ENCODE measurements at regions of chr12 and their contacts with region 1.

Region 1: DNA sequence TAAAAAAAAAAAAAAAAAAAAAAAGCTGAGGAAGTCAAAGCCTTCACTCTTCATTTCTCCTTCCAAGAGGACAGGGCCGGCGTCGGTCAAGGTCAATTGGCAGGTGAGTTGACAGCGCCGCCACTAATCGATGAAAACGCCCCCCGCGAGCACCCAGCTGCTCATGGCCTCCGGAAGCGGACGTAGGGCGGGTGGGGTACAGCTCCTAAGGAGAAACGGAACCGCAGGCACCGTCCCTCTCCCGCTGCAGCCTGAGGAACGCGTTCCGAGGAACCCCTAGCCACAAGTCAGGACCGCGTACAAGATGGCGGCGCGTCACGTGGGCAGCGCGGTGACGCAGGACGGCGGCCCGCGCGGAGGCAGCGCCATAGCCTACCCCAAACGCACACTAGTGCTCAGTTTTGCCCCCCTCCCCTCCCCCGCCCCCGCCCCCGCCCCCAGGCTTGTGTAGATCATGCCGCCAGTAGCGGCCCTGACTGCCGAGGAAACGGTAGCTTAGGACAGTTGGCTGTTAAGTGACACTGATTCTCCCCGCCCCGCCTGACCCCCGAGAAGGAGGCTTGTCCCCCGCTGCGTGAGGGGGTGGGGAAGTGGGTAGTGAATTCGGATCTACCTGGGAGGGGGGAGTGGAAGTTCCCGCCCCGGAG is at the start of gene ATF1:
- DNase-seq: peak; percentile 89 to 91 (median 91)
- H3K4me3 ChIP-seq: peak within 1 kb of the TSS; percentile 67 to 69
- H3K4me3 Mint-ChIP-seq: peak within 1 kb of the TSS; percentile 85 to 99 (median 93)
- H3K27ac ChIP-seq: peak within 1 kb of the TSS; percentile 77
- H3K27ac Mint-ChIP-seq: peak within 1 kb of the TSS; percentile 91 to 97 (median 96)
- H3K4me1 ChIP-seq: peaks cover 27% of the 10 kb centered on the region
- H3K4me1 Mint-ChIP-seq: peaks cover 18 to 48% (median 29%) of the 10 kb centered on the region in 4 donors
- H3K27me3 ChIP-seq: no peaks in the 10 kb centered on the region
- H3K27me3 Mint-ChIP-seq: no peaks in the 10 kb centered on the region
- total RNA-seq, gene ATF1: 52.2 to 52.3 TPM

Region 2: DNA sequence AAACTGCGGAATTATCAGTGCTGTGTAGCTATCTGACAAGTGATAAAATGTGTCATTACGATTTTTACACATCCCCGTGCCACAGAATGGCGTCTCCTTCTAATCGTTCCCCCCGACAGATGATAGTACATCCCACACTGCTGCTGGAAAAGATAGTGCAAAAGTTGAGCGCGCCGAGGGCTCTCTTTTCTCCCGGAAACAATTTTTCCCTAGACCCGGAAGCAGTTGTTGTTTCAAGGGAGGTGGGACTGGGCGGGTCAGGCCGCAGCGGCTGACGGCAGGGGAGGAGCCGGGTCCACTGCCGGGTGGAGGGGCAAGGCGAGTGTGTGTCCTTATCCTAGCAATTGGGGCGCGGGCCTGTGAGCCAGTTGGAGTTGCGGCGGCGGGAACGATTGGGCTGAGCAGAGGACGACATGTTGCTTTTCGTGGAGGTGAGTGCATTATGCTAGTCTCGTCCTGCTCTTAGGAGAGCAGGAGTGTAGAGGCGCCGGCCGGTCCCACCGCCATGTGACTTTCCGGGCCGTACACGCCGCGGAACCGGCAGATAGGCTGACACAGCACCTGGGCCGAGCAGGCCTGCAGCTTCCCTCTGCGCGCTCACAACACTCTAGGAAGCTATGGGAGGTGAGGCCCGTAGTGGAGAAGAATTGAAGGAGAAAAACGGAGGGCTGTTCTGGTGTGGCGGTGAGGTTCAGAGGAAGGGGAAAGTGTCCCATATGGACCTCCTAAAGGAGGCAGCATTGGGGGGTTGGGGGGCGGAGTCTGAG is 363.0 kb before region 1 on chr12 and contains the start of gene LARP4:
- CTCF ChIA-PET with region 1: no interaction called
- POLR2A ChIA-PET with region 1: no interaction called
- intact Hi-C with region 1: loop called (anchors 1 kb)
- DNase-seq: peak; percentile 90 to 94 (median 91)
- H3K4me3 ChIP-seq: peak within 1 kb of the TSS; percentile 63 to 90
- H3K4me3 Mint-ChIP-seq: peak within 1 kb of the TSS; percentile 91 to 99 (median 97)
- H3K27ac ChIP-seq: peak within 1 kb of the TSS; percentile 76
- H3K27ac Mint-ChIP-seq: peak within 1 kb of the TSS; percentile 89 to 98 (median 95)
- H3K4me1 ChIP-seq: peaks cover 28% of the 10 kb centered on the region
- H3K4me1 Mint-ChIP-seq: peaks cover 19 to 42% (median 30%) of the 10 kb centered on the region in 4 donors
- H3K27me3 ChIP-seq: no peaks in the 10 kb centered on the region
- H3K27me3 Mint-ChIP-seq: peaks cover 1 to 5% of the 10 kb centered on the region in 2 donors
- total RNA-seq, gene LARP4: 38.7 to 40.7 TPM

Region 3: GRCh38 chr12:50776749-50777728 is 13.3 kb after region 1 on chr12:
- CTCF ChIA-PET with region 1: interaction called, 19 read pairs
- POLR2A ChIA-PET with region 1: interaction called, 11 read pairs
- intact Hi-C with region 1: no loop called
- DNase-seq: no peak
- H3K4me3 ChIP-seq: no peak overlapping the region
- H3K4me3 Mint-ChIP-seq: peak overlapping the region in 1 of 8 donors; percentile 38
- H3K27ac ChIP-seq: no peak overlapping the region
- H3K27ac Mint-ChIP-seq: peak overlapping the region in 3 of 7 donors; percentile 30 to 72 (median 70)
- H3K4me1 ChIP-seq: peaks cover 9% of the 10 kb centered on the region
- H3K4me1 Mint-ChIP-seq: peaks cover 21 to 38% (median 32%) of the 10 kb centered on the region in 4 donors
- H3K27me3 ChIP-seq: no peaks in the 10 kb centered on the region
- H3K27me3 Mint-ChIP-seq: no peaks in the 10 kb centered on the region

Region 4: GRCh38 chr12:50986966-50987737 is 223.4 kb after region 1 on chr12:
- CTCF ChIA-PET with region 1: interaction called, 47 read pairs
- POLR2A ChIA-PET with region 1: interaction called, 6 read pairs
- intact Hi-C with region 1: loop called (anchors 1 kb)
- DNase-seq: peak in 4 of 5 donors; percentile 14 to 34 (median 18)
- H3K4me3 ChIP-seq: no peak overlapping the region
- H3K4me3 Mint-ChIP-seq: no peak overlapping the region
- H3K27ac ChIP-seq: no peak overlapping the region
- H3K27ac Mint-ChIP-seq: peak overlapping the region in 6 of 7 donors; percentile 30 to 86 (median 62)
- H3K4me1 ChIP-seq: no peaks in the 10 kb centered on the region
- H3K4me1 Mint-ChIP-seq: peaks cover 0 to 6% (median 4%) of the 10 kb centered on the region in 4 donors
- H3K27me3 ChIP-seq: no peaks in the 10 kb centered on the region
- H3K27me3 Mint-ChIP-seq: no peaks in the 10 kb centered on the region

Region 5: DNA sequence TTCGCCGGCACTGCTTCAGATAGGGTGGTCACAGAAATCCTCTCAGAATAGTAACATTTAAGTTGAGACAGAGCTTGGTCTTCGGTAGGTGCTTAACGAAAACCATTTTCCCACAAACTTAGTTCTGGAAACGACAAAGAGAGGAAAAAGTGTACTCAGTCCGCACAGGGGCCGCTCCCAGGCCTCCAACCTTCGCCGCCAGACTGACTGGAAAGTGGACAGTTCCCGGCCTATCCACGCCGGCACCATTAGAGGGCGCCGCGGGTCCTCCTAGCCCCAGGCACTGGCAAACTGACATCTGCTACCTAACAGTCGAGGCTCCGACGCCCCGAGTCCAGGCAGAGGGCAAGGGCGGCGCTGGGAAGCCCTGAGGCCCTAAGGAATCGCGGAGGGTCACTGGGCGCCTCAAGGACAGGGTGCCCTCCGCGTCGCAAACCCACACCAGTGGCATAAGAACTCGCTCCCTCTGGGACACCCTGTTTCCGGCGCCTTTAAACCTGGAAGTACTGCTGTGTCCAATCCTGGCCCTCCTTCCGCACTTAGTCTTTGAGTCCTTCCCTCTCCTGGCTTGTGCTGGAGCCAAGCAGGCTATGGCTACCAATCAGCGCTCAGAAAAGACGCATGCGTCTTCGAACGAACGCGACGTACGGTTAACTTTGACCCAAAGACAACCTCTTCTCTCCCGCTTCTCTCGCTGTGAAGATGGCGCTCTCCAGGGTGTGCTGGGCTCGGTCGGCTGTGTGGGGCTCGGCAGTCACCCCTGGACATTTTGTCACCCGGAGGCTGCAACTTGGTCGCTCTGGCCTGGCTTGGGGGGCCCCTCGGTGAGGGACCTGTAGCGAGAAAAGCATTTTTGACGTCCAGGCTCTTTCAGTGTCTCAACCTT is 284.1 kb after region 1 on chr12 and contains the start of gene LETMD1:
- CTCF ChIA-PET with region 1: interaction called, 5 read pairs
- POLR2A ChIA-PET with region 1: interaction called, 9 read pairs
- intact Hi-C with region 1: loop called (anchors 1 kb)
- DNase-seq: peak; percentile 94 to 97 (median 96)
- H3K4me3 ChIP-seq: peak within 1 kb of the TSS; percentile 92 to 98
- H3K4me3 Mint-ChIP-seq: peak within 1 kb of the TSS; percentile 93 to 98 (median 95)
- H3K27ac ChIP-seq: peak within 1 kb of the TSS; percentile 81
- H3K27ac Mint-ChIP-seq: peak within 1 kb of the TSS; percentile 95 to 99 (median 97)
- H3K4me1 ChIP-seq: peaks cover 27% of the 10 kb centered on the region
- H3K4me1 Mint-ChIP-seq: peaks cover 15 to 40% (median 28%) of the 10 kb centered on the region in 4 donors
- H3K27me3 ChIP-seq: no peaks in the 10 kb centered on the region
- H3K27me3 Mint-ChIP-seq: no peaks in the 10 kb centered on the region
- total RNA-seq, gene LETMD1: 83.7 to 93.3 TPM

Region 6: DNA sequence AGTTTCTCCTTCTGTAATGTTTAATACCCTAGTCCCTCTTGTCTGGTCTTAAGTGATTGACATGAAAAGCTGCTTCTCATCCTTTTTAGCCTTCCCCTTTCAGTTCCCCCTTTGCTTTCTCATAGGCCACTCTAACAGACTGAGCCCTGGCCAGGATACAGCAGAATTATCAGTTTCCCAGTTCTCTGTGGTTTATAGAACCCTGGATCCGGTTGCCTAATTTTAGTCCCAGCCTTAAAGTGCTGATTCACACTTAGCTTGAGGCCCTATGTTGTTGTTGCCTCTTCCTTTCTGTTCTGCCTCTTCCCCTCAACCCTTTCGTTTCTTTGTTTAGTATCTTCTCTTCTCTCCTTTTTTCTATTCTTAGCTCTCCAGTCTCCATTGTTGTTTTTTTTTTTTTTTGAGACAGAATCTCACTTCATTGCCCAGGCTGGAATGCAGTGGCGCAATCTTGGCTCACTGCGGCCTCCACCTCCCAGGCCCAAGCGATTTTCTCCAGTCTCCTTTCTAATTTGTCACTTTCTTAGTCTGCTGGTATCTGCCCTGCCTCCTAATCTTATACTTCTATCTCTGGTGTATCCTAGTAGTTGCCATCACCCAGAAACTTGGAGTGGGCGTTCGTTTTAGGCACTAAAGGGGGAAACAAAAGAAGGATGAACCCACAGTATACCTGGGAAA is 563.1 kb after region 1 on chr12:
- CTCF ChIA-PET with region 1: no interaction called
- POLR2A ChIA-PET with region 1: interaction called, 3 read pairs
- intact Hi-C with region 1: loop called (anchors 10 kb)
- DNase-seq: no peak
- H3K4me3 ChIP-seq: no peak overlapping the region
- H3K4me3 Mint-ChIP-seq: peak overlapping the region in 7 of 8 donors; percentile 40 to 74 (median 64)
- H3K27ac ChIP-seq: peak overlapping the region; percentile 27
- H3K27ac Mint-ChIP-seq: peak overlapping the region; percentile 77 to 98 (median 94)
- H3K4me1 ChIP-seq: peaks cover 65% of the 10 kb centered on the region
- H3K4me1 Mint-ChIP-seq: peaks cover 51 to 91% (median 71%) of the 10 kb centered on the region in 4 donors
- H3K27me3 ChIP-seq: no peaks in the 10 kb centered on the region
- H3K27me3 Mint-ChIP-seq: no peaks in the 10 kb centered on the region

Region 7: GRCh38 chr12:51531978-51532497 is 768.3 kb after region 1 on chr12:
- CTCF ChIA-PET with region 1: no interaction called
- POLR2A ChIA-PET with region 1: no interaction called
- intact Hi-C with region 1: loop called (anchors 5 kb)
- DNase-seq: peak; percentile 60 to 70 (median 65)
- H3K4me3 ChIP-seq: no peak overlapping the region
- H3K4me3 Mint-ChIP-seq: no peak overlapping the region
- H3K27ac ChIP-seq: no peak overlapping the region
- H3K27ac Mint-ChIP-seq: peak overlapping the region in 2 of 7 donors; percentile 9 to 27
- H3K4me1 ChIP-seq: no peaks in the 10 kb centered on the region
- H3K4me1 Mint-ChIP-seq: peaks cover 3 to 8% (median 6%) of the 10 kb centered on the region in 4 donors
- H3K27me3 ChIP-seq: no peaks in the 10 kb centered on the region
- H3K27me3 Mint-ChIP-seq: peaks cover 6 to 11% of the 10 kb centered on the region in 2 donors